Sigmoid colon (tissue), 7 donors: ENCODE measurements at regions of chr12 and their contacts with region 1.

Region 1: GRCh38 chr12:93784339-93785086 is 107.3 kb downstream of the CRADD start:
- DNase-seq: peak; percentile 96
- H3K4me3 ChIP-seq: no peak overlapping the region
- H3K27ac ChIP-seq: peak overlapping the region; percentile 72 to 89 (median 80)
- H3K4me1 ChIP-seq: peaks cover 0 to 78% (median 62%) of the 10 kb centered on the region in 4 donors
- H3K27me3 ChIP-seq: no peaks in the 10 kb centered on the region
- CTCF ChIP-seq: no peak
- EP300 ChIP-seq: peak; percentile 89 to 98 (median 96)
- POLR2A ChIP-seq: no peak

Region 2: DNA sequence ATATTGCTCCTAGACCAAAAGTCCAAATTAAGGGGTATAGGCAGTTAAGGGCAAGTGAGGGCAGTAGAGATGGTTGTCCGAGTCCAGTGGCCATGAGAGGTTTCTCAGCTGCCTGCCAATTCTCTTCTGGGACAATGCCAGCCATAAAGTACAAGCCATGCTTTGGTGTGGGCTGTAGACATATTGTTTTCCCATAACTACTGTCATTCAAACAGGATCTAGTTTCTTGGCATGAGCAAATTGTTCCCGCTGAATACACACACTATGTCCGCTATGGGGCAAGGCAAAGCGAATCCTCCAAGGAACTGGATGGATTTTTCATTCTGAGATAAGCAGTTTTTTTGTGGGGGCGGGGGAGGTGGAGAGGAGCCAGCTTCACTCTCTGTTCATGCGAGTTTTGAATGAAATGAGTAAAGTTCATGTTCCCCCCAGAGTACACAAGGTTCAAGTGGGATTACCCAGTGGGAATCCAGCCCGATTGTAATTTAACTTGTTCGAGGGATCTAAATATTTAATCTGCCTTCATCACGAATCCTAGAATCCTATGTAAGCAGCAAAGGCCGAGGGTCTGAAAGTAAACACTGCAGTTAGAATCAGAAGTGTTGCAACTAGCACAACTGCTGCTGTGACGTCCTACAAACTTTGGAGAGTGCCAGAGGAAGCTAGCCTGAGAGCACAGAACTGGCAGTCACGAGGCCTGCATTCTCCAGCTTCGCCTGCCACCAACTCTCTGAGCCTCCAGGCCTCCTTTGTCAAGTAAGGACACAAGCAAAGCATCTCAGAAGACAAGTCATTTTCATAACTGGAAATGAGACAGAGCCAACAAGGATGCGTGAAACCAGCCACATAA is 29.7 kb after region 1 on chr12:
- intact Hi-C with region 1: loop called (anchors 1 kb)
- DNase-seq: peak; percentile 97
- H3K4me3 ChIP-seq: no peak overlapping the region
- H3K27ac ChIP-seq: peak overlapping the region; percentile 85 to 91 (median 90)
- H3K4me1 ChIP-seq: peaks cover 0 to 78% (median 67%) of the 10 kb centered on the region in 4 donors
- H3K27me3 ChIP-seq: no peaks in the 10 kb centered on the region
- CTCF ChIP-seq: no peak
- EP300 ChIP-seq: peak; percentile 71 to 95 (median 88)
- POLR2A ChIP-seq: no peak